ENCODE measurements at regions of chr6 and their contacts with region 1.

Region 1: GRCh38 chr6:73388800-73389512 is 5.7 kb upstream of the DDX43 start:
- DNase-seq: peak; percentile 86 to 87
- H3K4me3 ChIP-seq: peak overlapping the region; percentile 58
- H3K27ac ChIP-seq: peak overlapping the region; percentile 78
- H3K4me1 ChIP-seq: peaks cover 31% of the 10 kb centered on the region
- H3K27me3 ChIP-seq: no peaks in the 10 kb centered on the region
- CTCF ChIP-seq: peak; percentile 77

Region 2: DNA sequence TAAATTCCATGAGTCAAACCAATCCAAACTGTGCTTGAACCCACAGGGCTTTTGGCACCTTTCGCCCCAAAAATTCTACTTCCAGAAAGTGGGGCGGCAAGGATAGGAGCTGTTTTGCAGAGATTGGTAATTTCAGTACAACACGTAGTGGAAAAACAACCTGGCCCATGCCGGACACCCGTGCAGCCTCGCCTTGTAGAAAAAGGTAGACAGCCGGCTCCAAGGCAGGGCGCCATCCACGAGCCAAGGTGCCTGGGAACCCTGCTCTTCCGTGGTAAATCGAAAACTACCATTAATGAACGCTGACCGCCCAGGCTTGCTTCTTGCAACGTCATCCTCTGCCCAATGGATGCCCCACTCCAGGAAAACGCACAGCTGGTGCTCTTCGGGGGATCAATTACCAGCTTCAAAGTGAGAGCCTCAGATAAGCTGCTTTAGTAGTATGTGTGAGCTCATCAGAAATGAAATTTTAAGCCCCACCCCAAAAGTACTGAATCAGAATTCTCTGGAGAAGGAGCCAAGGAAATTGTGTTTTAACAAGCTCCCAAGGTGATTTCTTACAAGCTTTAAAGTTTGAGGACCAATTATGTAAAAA is 21.1 kb before region 1 on chr6:
- CTCF ChIA-PET with region 1: interaction called, 12 read pairs
- POLR2A ChIA-PET with region 1: no interaction called
- intact Hi-C with region 1: no loop called
- DNase-seq: no peak
- H3K4me3 ChIP-seq: no peak overlapping the region
- H3K27ac ChIP-seq: no peak overlapping the region
- H3K4me1 ChIP-seq: no peaks in the 10 kb centered on the region
- H3K27me3 ChIP-seq: no peaks in the 10 kb centered on the region
- CTCF ChIP-seq: no peak

Region 3: GRCh38 chr6:73451223-73452107 is 62.5 kb after region 1 on chr6:
- CTCF ChIA-PET with region 1: no interaction called
- POLR2A ChIA-PET with region 1: no interaction called
- intact Hi-C with region 1: loop called (anchors 1 kb)
- DNase-seq: peak; percentile 38 to 43
- H3K4me3 ChIP-seq: peak overlapping the region; percentile 92
- H3K27ac ChIP-seq: peak overlapping the region; percentile 74
- H3K4me1 ChIP-seq: peaks cover 27% of the 10 kb centered on the region
- H3K27me3 ChIP-seq: no peaks in the 10 kb centered on the region
- CTCF ChIP-seq: no peak

Region 4: GRCh38 chr6:73604020-73604419 is 215.1 kb after region 1 on chr6:
- CTCF ChIA-PET with region 1: no interaction called
- POLR2A ChIA-PET with region 1: no interaction called
- intact Hi-C with region 1: no loop called
- DNase-seq: no peak
- H3K4me3 ChIP-seq: no peak overlapping the region
- H3K27ac ChIP-seq: no peak overlapping the region
- H3K4me1 ChIP-seq: no peaks in the 10 kb centered on the region
- H3K27me3 ChIP-seq: no peaks in the 10 kb centered on the region
- CTCF ChIP-seq: no peak

Region 5: GRCh38 chr6:74100719-74101287 is 711.8 kb after region 1 on chr6:
- CTCF ChIA-PET with region 1: no interaction called
- POLR2A ChIA-PET with region 1: no interaction called
- intact Hi-C with region 1: no loop called
- DNase-seq: no peak
- H3K4me3 ChIP-seq: no peak overlapping the region
- H3K27ac ChIP-seq: no peak overlapping the region
- H3K4me1 ChIP-seq: no peaks in the 10 kb centered on the region
- H3K27me3 ChIP-seq: no peaks in the 10 kb centered on the region
- CTCF ChIP-seq: no peak